ENCODE measurements at regions of chr1 and their contacts with region 1.

Region 1: DNA sequence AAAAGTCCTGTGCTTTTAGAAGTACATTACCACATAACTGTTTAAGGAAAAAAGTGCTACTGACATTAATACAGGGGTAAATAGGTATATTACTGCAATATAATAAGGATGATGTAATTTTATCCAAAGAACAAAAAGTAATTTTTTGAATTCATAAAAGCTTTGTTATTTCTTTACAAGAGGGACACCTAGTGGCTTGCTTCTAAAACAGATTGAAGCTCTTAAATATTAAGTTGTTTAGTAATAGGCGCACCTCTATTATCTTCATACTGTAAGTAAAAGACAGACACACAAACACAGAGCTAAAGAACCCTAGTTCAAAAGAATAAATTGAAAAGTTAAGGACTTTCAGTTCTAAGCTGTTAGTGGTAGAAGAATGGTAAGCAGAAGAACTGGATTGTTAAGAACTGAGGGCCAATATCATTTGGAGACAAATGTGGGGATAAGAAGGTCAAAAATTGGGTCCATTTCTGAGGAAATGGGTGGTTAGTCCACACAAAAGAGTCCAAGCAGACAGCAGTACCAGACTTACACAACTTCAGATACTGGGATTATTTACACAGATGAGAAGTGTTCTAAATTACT is 15.4 kb downstream of the ZNHIT6 start:
- DNase-seq: no peak
- ATAC-seq: peak; percentile 44

Region 2: GRCh38 chr1:85307987-85308832 is 384.6 kb before region 1 on chr1:
- intact Hi-C with region 1: loop called (anchors 5 kb)
- DNase-seq: peak; percentile 93
- ATAC-seq: peak; percentile 99

Region 3: DNA sequence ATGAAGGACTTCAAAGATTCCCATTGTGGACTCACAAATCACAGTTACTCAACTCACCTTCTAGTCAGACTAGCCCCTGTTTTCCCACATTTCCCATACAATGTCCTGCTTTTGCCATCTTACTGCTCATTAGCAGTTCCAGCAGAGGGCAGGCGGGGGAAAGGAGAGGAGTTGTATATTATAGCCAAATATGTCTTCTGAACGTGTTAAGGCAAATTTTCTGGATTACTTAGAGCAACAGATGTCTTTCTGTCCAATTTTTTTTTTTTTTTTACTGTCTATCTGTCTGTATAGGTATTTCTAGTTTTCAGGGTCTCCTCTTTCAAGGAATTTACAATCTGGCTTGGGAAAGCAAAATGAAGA is 197.9 kb before region 1 on chr1:
- intact Hi-C with region 1: loop called (anchors 10 kb)
- DNase-seq: no peak
- ATAC-seq: peak; percentile 62

Region 4: DNA sequence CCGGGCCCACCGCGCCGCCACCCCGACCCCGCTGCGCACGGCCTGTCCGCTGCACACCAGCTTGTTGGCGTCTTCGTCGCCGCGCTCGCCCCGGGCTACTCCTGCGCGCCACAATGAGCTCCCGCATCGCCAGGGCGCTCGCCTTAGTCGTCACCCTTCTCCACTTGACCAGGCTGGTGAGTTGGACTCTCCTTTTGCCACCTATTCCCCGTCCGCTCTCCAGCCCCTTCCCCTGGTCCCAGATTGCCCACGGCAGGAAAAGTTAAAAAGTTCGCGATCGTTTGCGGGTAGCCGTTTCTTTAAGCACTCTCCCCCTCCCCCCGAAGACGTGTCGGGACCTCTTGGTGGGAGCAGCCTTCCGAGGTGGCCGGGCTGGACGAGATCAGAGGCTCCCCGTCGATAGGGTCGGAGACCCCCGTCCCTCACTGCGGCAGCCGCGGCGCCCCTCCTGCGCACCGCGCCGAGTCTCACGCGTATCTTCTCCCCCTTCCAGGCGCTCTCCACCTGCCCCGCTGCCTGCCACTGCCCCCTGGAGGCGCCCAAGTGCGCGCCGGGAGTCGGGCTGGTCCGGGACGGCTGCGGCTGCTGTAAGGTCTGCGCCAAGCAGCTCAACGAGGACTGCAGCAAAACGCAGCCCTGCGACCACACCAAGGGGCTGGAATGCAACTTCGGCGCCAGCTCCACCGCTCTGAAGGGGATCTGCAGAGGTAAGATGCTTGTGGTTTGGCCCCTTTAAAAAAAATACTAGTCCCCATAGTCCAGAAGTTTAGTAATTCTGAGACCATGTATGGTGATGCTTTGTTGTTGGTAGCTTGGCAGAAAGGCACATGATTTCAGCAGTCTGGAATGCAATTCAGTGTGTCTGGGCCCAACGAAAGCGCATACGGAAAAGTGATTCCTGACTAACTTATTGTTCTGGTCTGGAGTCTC is 111.7 kb before region 1 on chr1:
- intact Hi-C with region 1: loop called (anchors 5 kb)
- DNase-seq: peak; percentile 86
- ATAC-seq: peak; percentile 73

Region 5: DNA sequence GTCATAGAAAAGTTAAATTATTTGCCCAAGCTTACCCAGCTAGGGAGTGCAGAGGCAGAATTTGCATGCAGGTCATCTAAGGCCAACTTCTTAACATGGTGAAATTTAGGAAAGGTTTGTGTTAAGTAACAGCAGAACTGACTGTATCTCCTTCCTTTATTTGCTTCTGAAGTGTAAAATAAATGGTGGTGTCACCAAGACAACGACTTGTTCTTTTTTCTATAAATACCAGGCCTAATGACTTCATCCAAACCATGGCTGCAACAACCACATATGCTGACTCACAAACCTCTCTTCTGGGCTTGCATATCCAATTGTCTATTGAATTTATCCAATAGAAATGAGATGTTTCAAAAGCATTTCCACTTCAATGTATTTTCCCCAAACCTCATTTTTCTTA is 444.6 kb after region 1 on chr1:
- intact Hi-C with region 1: no loop called
- DNase-seq: no peak
- ATAC-seq: no peak